Activated naive CD4-positive, alpha-beta T cell treated with anti-CD3 and anti-CD28 coated beads for 36 hours (primary cell): ENCODE measurements at regions of chr11 and their contacts with region 1.

Region 1: GRCh38 chr11:117098269-117099232 is at the start of gene SIK3:
- DNase-seq: peak; percentile 90
- H3K4me3 Mint-ChIP-seq: peak within 1 kb of the TSS; percentile 97
- H3K27ac Mint-ChIP-seq: peak within 1 kb of the TSS; percentile 89
- H3K4me1 Mint-ChIP-seq: peaks cover 47% of the 10 kb centered on the region
- H3K27me3 Mint-ChIP-seq: no peaks in the 10 kb centered on the region
- total RNA-seq, gene SIK3: 13.8 to 15.7 TPM

Region 2: GRCh38 chr11:116879800-116880625 is 218.5 kb before region 1 on chr11:
- CTCF ChIA-PET with region 1: interaction called, 11 read pairs
- intact Hi-C with region 1: loop called (anchors 2 kb)
- DNase-seq: peak; percentile 33
- H3K4me3 Mint-ChIP-seq: no peak overlapping the region
- H3K27ac Mint-ChIP-seq: no peak overlapping the region
- H3K4me1 Mint-ChIP-seq: peaks cover 23% of the 10 kb centered on the region
- H3K27me3 Mint-ChIP-seq: no peaks in the 10 kb centered on the region

Region 3: GRCh38 chr11:116927163-116927974 is 171.2 kb before region 1 on chr11:
- CTCF ChIA-PET with region 1: interaction called, 7 read pairs
- intact Hi-C with region 1: loop called (anchors 1 kb)
- DNase-seq: peak; percentile 73
- H3K4me3 Mint-ChIP-seq: peak overlapping the region; percentile 34
- H3K27ac Mint-ChIP-seq: peak overlapping the region; percentile 75
- H3K4me1 Mint-ChIP-seq: peaks cover 61% of the 10 kb centered on the region
- H3K27me3 Mint-ChIP-seq: no peaks in the 10 kb centered on the region